ENCODE measurements at regions of chr14 and their contacts with region 1.

Region 1: GRCh38 chr14:92352158-92352985 is 29.4 kb downstream of the SLC24A4 start:
- DNase-seq: peak; percentile 67
- ATAC-seq: peak; percentile 59
- H3K4me3 Mint-ChIP-seq: no peak overlapping the region
- H3K27ac Mint-ChIP-seq: no peak overlapping the region
- H3K4me1 Mint-ChIP-seq: no peaks in the 10 kb centered on the region
- H3K27me3 Mint-ChIP-seq: no peaks in the 10 kb centered on the region
- CTCF ChIP-seq: peak; percentile 70

Region 2: DNA sequence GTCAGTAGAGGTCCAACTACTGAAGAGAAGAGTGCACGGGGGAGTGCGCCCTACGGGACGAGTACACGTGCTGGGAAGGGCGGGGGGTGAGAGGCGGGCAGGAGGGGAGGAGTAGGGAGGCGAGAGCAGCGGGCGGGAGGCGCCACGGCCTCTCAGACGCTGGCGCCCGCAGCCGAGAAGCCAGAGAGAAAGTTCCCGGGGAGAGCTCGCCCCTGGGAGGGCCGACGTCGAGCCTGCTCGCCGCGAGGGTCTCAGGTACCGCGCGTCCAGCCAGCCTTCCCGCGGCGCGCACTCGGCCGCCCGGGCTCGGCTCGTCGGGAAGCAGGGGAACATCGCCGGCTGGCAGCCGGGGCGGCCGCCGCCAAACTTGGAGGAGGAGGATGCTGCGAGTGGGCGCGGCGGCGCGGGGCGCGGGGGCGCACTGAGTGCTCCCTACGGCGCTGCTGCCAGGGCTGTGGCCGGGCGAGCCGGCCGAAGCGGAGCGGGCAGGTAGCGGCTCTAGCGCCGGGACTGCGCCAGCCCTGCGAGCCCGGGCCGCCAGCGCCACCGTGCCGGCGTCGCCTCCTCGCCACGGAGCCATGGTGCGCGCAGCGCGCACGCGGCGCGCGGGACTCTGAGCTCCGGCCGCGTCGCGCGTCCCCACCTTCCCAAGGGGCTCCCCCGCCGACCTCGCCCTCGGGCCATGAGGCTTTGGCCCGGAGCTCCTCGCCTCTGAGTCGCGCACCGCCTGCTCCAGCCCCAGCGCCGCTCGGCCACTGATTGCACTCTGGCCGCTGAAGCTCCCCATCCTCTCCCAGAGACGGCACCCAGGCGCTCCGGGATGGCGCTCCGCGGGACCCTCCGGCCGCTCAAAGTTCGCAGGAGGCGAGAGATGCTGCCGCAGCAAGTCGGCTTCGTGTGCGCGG is 29.1 kb before region 1 on chr14 and contains the start of gene SLC24A4:
- CTCF ChIA-PET with region 1: interaction called, 10 read pairs
- POLR2A ChIA-PET with region 1: no interaction called
- DNase-seq: peak; percentile 56
- ATAC-seq: peak; percentile 55
- H3K4me3 Mint-ChIP-seq: peak within 1 kb of the TSS; percentile 74
- H3K27ac Mint-ChIP-seq: no peak within 1 kb of the TSS
- H3K4me1 Mint-ChIP-seq: peaks cover 14% of the 10 kb centered on the region
- H3K27me3 Mint-ChIP-seq: peaks cover 86% of the 10 kb centered on the region
- CTCF ChIP-seq: no peak
- total RNA-seq, gene SLC24A4: 0.37 to 0.90 TPM (median 0.46 TPM) in 3 replicates

Region 3: DNA sequence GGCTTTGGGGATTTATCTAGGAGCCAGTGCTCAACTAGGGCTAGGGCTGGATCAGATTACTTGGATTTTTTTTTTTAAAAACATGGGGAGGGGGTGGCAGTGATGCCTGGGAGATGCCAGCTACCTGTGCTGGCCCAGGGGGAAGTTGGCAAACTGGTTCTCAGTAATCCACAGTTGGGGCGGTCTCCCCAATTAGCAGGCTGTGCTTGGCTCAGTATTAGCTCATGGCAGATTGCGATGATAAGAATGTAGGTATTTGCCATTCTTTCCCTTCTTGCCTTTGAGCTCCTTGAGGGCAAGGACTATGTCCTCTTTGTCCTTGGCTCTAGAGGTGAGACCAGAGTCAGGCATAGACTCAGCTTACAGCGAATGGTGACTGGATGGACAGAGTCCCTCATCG is 15.3 kb before region 1 on chr14:
- CTCF ChIA-PET with region 1: interaction called, 12 read pairs
- POLR2A ChIA-PET with region 1: no interaction called
- DNase-seq: no peak
- ATAC-seq: no peak
- H3K4me3 Mint-ChIP-seq: no peak overlapping the region
- H3K27ac Mint-ChIP-seq: no peak overlapping the region
- H3K4me1 Mint-ChIP-seq: peaks cover 7% of the 10 kb centered on the region; the same call in 1 of the 2 replicates
- H3K27me3 Mint-ChIP-seq: no peaks in the 10 kb centered on the region
- CTCF ChIP-seq: no peak